WTC11 (cell line): ENCODE measurements at regions of chr22 and their contacts with region 1.

Region 1: GRCh38 chr22:46511151-46512038 is 26.0 kb downstream of the CELSR1 start:
- DNase-seq: no peak
- ATAC-seq: no peak
- H3K4me3 Mint-ChIP-seq: no peak overlapping the region
- H3K27ac Mint-ChIP-seq: peak overlapping the region; percentile 63; the same call in 1 of the 2 replicates
- H3K4me1 Mint-ChIP-seq: peaks cover 27% of the 10 kb centered on the region
- H3K27me3 Mint-ChIP-seq: no peaks in the 10 kb centered on the region
- CTCF ChIP-seq: no peak

Region 2: DNA sequence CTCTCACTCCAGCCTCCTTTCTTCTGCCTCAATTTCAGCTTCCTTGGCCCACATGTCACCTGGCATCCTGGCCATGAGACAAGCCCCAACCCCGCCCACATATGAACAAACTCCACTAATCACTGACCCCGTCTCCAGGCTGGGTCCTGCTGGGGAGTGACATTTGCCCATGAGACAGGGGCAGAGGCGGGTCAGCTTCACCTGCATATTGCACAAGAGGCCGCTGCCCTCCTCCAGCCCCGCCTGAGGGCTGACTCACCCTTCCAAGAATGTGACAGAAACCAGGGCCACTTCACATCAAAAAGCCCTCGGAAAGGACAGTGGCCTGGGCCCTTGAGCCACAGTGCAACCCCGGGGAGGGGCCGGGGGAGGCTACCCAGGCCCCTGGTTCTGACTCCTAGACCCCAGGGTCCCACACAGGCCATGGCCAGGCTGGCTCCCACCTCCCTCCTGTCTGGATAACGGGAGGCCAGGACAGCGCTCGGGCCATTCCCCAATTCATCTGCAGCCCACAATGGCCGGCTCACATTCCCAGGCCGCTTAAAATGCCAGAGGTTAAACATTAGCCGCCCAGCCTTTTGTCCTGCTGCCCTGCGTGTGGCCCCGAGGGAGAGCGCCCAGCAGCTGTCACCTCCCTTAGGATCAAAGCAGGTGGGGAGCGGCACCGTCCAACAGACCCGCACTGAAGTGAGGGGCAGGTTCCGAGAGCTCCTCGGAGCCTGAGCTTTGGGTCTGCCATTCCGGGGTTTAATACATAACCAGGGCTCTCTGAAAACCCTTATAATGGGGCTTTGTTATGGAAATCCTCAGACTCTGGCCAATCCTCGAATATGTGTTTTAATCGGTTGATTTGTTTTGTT is 133.6 kb before region 1 on chr22:
- CTCF ChIA-PET with region 1: no interaction called
- POLR2A ChIA-PET with region 1: interaction called, 11 read pairs
- DNase-seq: peak; percentile 56
- ATAC-seq: peak; percentile 65
- H3K4me3 Mint-ChIP-seq: peak overlapping the region; percentile 27; the same call in 1 of the 2 replicates
- H3K27ac Mint-ChIP-seq: peak overlapping the region; percentile 80
- H3K4me1 Mint-ChIP-seq: peaks cover 34% of the 10 kb centered on the region
- H3K27me3 Mint-ChIP-seq: no peaks in the 10 kb centered on the region
- CTCF ChIP-seq: no peak